A549 (cell line): ENCODE measurements at regions of chr18 and their contacts with region 1.

Region 1: DNA sequence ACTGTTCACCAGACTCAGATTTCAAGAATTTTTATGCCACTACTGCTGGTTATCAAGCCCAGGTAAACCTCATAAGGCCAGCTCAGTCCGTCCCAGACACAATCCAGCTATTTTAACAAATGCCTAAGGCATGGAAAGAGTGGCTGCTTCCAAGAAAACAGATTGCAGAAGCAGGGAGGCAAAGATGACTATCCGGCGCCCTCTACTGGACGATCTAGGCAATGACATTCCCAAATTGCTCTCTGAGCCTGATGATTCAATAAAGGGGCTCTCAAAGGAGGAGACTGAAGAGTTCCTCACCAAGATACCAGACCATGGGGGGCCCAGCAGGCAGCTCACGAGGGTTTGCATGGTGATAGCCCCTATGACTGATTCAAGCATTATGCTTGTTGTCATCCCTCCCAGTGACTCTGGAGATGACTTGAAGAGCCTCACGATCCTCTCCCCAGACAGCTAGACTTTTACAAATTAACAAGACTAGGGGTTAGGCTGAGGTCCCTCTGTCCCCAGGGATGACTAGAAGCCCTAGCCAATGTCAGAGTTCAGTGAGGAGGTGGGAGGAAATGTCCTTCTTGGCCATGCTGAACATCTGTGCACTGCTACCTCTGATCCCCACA is 25.0 kb downstream of the SERPINB8 start:
- DNase-seq: peak; percentile 18 to 43
- ATAC-seq: peak; percentile 54 to 77; a peak in 4 of 6 replicates
- H3K4me3 ChIP-seq: no peak overlapping the region
- H3K27ac ChIP-seq: no peak overlapping the region
- H3K4me1 ChIP-seq: no peaks in the 10 kb centered on the region
- CTCF ChIP-seq: peak; percentile 58
- EP300 ChIP-seq: no peak
- POLR2A ChIP-seq: no peak
- RAD21 ChIP-seq: peak; percentile 47 to 60

Region 2: GRCh38 chr18:63979409-63979920 is 15.4 kb before region 1 on chr18:
- CTCF ChIA-PET with region 1: interaction called, 25 read pairs
- POLR2A ChIA-PET with region 1: no interaction called
- DNase-seq: peak; percentile 36 to 55
- ATAC-seq: peak in 1 of 2 experiments; percentile 87; a peak in 4 of 6 replicates
- H3K4me3 ChIP-seq: no peak overlapping the region; the same call in 2 of the 3 replicates
- H3K27ac ChIP-seq: peak overlapping the region; percentile 30 to 57; a peak in 2 of 6 replicates
- H3K4me1 ChIP-seq: 0 out of 3 replicates have a peak, but pooled peaks cover 3% of the 10 kb centered on the region
- CTCF ChIP-seq: peak; percentile 70
- EP300 ChIP-seq: no peak
- POLR2A ChIP-seq: no peak
- RAD21 ChIP-seq: peak; percentile 59 to 66